H1 (cell line): ENCODE measurements at regions of chr20 and their contacts with region 1.

Region 1: DNA sequence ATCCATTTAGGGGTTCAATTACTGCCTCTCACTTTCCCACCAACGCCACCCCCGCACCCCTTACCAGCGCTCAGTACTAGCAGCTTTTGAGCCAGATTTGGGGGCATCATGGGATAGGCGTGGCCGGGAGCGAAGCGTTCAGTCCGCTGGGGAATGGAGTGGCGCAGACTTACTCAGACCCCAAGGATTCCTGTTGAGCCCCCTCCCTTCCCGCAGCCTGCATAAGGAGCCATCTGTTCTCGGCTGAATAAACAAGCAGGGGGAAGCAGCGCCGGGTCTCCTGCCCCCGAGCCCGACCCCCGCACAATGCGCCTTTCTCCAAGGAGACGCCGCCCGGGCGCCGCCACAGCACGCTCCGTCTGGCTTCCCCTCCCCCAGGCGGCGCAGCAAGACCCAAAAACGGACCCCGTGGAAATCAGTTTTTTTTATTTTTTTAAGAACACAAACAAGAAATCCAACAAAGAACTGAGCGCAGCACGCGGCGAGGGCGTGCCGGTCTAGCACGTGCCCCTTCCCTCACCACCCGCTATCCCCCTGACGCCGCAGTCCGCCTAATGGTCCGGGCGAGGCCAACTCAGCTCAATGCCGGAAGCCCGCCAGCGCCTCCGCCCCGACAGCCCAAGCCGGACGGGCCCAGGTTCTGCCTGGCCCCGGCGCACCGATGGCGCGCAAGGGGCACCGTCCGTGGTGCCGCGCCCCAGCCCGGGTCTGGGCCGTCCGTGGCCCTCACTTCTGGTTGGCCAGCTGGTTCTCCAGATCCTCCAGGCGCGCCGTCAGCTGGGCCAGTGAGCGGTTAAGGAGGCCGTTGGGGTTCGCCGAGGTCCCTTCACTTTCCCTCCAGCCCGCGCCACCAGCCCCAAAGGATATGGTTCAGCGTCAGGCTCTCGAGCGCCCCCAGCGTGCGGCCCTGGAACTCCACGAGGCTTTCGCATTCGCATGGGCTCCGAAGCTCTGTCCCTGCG is 13.3 kb upstream of the RBPJL start:
- DNase-seq: peak; percentile 64 to 99
- H3K4me3 ChIP-seq: peak overlapping the region; percentile 35 to 63 (median 54)
- H3K27ac ChIP-seq: no peak overlapping the region
- H3K4me1 ChIP-seq: peaks cover 0 to 3% (median 0%) of the 10 kb centered on the region in 4 experiments; a peak in 3 of 7 replicates
- H3K27me3 ChIP-seq: peaks cover 0 to 20% (median 11%) of the 10 kb centered on the region in 4 experiments; a peak in 6 of 7 replicates
- CTCF ChIP-seq: peak; percentile 88 to 96 (median 89)
- EP300 ChIP-seq: no peak
- POLR2A ChIP-seq: peak in 1 of 2 experiments; percentile 76; a peak in 2 of 3 replicates
- RAD21 ChIP-seq: peak; percentile 37 to 50

Region 2: GRCh38 chr20:45095753-45096371 is 197.5 kb before region 1 on chr20:
- CTCF ChIA-PET with region 1: interaction called, 41 read pairs
- POLR2A ChIA-PET with region 1: interaction called, 3 read pairs
- DNase-seq: peak in 1 of 2 experiments; percentile 76
- H3K4me3 ChIP-seq: no peak overlapping the region
- H3K27ac ChIP-seq: no peak overlapping the region
- H3K4me1 ChIP-seq: peaks cover 0 to 7% (median 2%) of the 10 kb centered on the region in 4 experiments; a peak in 5 of 7 replicates
- H3K27me3 ChIP-seq: peaks cover 5 to 34% (median 28%) of the 10 kb centered on the region in 4 experiments
- CTCF ChIP-seq: peak; percentile 29 to 80 (median 79)
- EP300 ChIP-seq: no peak
- POLR2A ChIP-seq: no peak
- RAD21 ChIP-seq: peak; percentile 85 to 87

Region 3: GRCh38 chr20:45229264-45230056 is 63.9 kb before region 1 on chr20:
- CTCF ChIA-PET with region 1: interaction called, 31 read pairs
- POLR2A ChIA-PET with region 1: no interaction called
- DNase-seq: peak; percentile 21 to 96
- H3K4me3 ChIP-seq: no peak overlapping the region
- H3K27ac ChIP-seq: no peak overlapping the region
- H3K4me1 ChIP-seq: no peaks in the 10 kb centered on the region
- H3K27me3 ChIP-seq: no peaks in the 10 kb centered on the region; a peak in 1 of 7 replicates
- CTCF ChIP-seq: peak; percentile 91 to 97 (median 93)
- EP300 ChIP-seq: no peak
- POLR2A ChIP-seq: no peak
- RAD21 ChIP-seq: peak; percentile 85 to 90

Region 4: GRCh38 chr20:45246109-45246508 is 47.2 kb before region 1 on chr20:
- CTCF ChIA-PET with region 1: interaction called, 16 read pairs
- POLR2A ChIA-PET with region 1: no interaction called
- DNase-seq: no peak
- H3K4me3 ChIP-seq: no peak overlapping the region
- H3K27ac ChIP-seq: no peak overlapping the region
- H3K4me1 ChIP-seq: no peaks in the 10 kb centered on the region
- H3K27me3 ChIP-seq: no peaks in the 10 kb centered on the region; a peak in 1 of 7 replicates
- CTCF ChIP-seq: no peak
- EP300 ChIP-seq: no peak
- POLR2A ChIP-seq: no peak
- RAD21 ChIP-seq: no peak

Region 5: GRCh38 chr20:45268531-45268930 is 24.8 kb before region 1 on chr20:
- CTCF ChIA-PET with region 1: interaction called, 18 read pairs
- POLR2A ChIA-PET with region 1: no interaction called
- DNase-seq: no peak
- H3K4me3 ChIP-seq: no peak overlapping the region
- H3K27ac ChIP-seq: no peak overlapping the region
- H3K4me1 ChIP-seq: peaks cover 0 to 2% (median 0%) of the 10 kb centered on the region in 4 experiments; a peak in 2 of 7 replicates
- H3K27me3 ChIP-seq: no peaks in the 10 kb centered on the region
- CTCF ChIP-seq: no peak
- EP300 ChIP-seq: no peak
- POLR2A ChIP-seq: no peak
- RAD21 ChIP-seq: no peak

Region 6: DNA sequence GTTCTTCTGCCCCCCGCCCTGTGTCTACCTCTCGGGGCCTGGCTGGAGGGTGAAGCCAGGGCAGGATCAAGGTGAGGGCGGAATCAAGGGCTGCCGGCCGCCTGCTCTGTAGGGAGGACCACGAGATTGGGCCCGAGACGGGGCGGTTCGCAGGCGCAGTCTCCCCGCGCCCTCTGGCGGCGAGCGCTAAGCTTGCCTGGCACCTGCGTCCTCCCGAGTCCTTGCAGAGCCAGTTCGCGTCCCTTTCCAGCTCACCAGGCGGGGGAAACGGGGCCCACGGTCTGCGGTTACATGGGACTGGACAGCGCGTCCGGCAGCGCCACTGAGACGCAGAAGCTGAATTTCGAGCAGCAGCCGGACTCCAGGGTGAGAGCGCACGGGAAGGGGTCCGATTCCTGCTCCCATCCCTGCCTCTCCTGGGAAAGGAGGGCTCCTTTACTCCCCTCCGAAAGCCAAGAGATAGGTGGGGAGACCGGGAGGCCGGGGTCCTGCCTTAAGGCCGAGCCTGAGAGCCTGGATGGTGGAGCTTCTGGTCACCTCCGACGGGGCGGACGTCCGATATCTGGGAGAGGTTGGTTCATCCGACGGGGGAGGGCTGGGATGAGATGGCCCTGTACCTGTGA is 18.4 kb after region 1 on chr20:
- CTCF ChIA-PET with region 1: interaction called, 29 read pairs
- POLR2A ChIA-PET with region 1: interaction called, 7 read pairs
- DNase-seq: peak in 1 of 2 experiments; percentile 93
- H3K4me3 ChIP-seq: peak overlapping the region; percentile 24 to 55 (median 48); a peak in 7 of 8 replicates
- H3K27ac ChIP-seq: no peak overlapping the region
- H3K4me1 ChIP-seq: peaks cover 0 to 11% (median 7%) of the 10 kb centered on the region in 4 experiments; a peak in 5 of 7 replicates
- H3K27me3 ChIP-seq: peaks cover 0 to 15% (median 5%) of the 10 kb centered on the region in 4 experiments; a peak in 5 of 7 replicates
- CTCF ChIP-seq: peak; percentile 87 to 96 (median 95)
- EP300 ChIP-seq: no peak
- POLR2A ChIP-seq: no peak
- RAD21 ChIP-seq: peak; percentile 69 to 73

Region 7: GRCh38 chr20:45507011-45507820 is 213.9 kb after region 1 on chr20:
- CTCF ChIA-PET with region 1: no interaction called
- POLR2A ChIA-PET with region 1: no interaction called
- DNase-seq: no peak
- H3K4me3 ChIP-seq: no peak overlapping the region
- H3K27ac ChIP-seq: no peak overlapping the region
- H3K4me1 ChIP-seq: no peaks in the 10 kb centered on the region; a peak in 1 of 7 replicates
- H3K27me3 ChIP-seq: no peaks in the 10 kb centered on the region
- CTCF ChIP-seq: no peak
- EP300 ChIP-seq: no peak
- POLR2A ChIP-seq: no peak
- RAD21 ChIP-seq: no peak